Psoas muscle (tissue), 8 donors: ENCODE measurements at regions of chr12 and their contacts with region 1.

Region 1: DNA sequence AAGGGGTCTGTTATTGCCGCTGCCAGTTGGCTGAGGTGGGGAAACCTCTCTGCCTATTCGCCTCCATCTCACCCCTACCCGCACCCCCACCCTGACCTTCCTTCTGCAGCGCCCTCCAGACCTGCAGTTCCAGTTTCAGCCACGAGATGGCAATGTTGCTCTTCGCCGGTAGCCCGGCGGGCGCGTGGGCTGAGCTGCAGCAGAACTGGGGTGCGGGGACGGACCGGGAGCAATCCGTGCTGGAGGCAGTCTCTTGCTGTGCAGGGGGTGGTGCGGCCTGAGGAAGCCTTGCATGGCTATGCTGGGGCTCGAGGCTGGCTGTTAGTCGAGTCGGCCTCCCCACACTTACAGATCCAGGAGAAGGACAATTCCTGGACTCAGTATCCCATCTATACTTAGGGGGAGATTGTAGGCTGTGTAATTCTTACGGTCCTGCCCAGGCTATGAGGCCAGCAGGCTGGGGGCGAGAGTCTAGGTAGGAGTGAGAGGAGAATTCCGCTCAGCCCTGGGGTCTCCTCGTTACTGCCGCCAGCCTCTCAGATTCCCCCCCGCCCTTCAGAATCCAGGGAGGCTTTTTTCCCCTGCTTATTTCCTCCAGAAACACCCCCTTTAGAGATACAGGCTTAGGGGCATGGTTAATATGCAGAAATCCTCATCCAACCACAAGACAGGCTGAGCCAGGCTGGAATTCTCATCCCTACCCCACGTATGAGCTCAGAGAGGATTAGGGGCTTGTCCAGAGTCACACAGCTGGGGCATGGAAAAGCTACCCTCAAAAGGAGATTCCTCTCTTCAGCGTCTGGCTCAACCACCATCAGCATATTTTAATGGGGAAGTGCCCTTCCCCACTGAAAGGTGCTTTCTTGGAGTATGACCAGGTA is 118.2 kb downstream of the AACS start:
- DNase-seq: peak; percentile 69 to 81
- ATAC-seq: peak; percentile 71 to 86 (median 72)
- H3K4me3 ChIP-seq: no peak overlapping the region
- H3K27ac ChIP-seq: no peak overlapping the region
- H3K4me1 ChIP-seq: peaks cover 14% of the 10 kb centered on the region
- H3K27me3 ChIP-seq: peaks cover 0 to 34% (median 0%) of the 10 kb centered on the region in 3 donors
- CTCF ChIP-seq: peak; percentile 98

Region 2: DNA sequence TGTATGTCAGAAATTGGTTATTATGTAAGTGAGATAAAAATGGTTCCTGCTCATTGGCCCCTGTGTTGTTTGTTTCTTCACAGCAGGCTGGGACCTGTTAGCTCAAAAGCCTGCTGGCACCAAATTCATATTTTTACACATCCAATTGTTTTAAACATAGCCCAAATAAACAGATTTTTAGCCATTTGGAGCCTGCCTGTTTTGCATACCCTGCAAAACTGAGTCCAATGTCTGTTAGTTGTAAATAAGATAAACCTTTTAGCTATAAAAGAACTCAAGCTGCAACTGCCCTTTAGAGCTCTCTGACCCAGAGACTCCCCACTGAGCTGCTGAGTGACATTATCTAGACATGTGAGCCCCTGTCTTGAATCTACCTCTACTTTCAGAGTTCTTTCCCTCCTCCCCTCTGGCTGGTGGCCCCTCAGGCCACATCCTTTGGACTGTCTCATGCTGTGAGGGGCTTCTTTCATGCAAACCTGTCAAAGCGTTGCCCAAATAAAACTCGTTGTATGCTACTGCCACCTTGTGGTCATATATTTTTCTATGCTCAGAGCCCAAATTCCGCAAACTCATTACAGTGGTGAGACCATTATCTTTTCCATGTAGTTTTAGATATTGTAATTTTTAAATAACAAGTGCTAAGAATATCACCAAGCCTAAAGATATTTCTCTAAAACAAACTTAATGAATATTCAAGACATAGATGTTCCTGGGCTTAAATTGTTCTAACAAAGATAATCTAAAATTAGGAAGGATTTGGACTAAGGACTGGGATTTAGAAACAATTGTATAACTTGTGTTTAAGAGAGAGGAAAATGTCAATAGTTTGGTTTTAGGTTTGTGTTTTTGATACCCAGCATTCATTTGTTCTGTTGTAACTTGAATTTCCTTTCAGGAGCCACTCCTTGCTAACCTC is 219.7 kb after region 1 on chr12:
- intact Hi-C with region 1: loop called in 1 of 2 experiments (anchors 5 kb)
- DNase-seq: no peak
- ATAC-seq: no peak
- H3K4me3 ChIP-seq: no peak overlapping the region
- H3K27ac ChIP-seq: no peak overlapping the region
- H3K4me1 ChIP-seq: no peaks in the 10 kb centered on the region
- H3K27me3 ChIP-seq: peaks cover 0 to 2% (median 0%) of the 10 kb centered on the region in 3 donors
- CTCF ChIP-seq: peak; percentile 53

Region 3: GRCh38 chr12:126874427-126875026 is 1691.1 kb after region 1 on chr12:
- intact Hi-C with region 1: loop called (anchors 2 to 5 kb)
- DNase-seq: peak; percentile 46 to 58
- ATAC-seq: no peak
- H3K4me3 ChIP-seq: no peak overlapping the region
- H3K27ac ChIP-seq: no peak overlapping the region
- H3K4me1 ChIP-seq: no peaks in the 10 kb centered on the region
- H3K27me3 ChIP-seq: no peaks in the 10 kb centered on the region
- CTCF ChIP-seq: peak; percentile 69